ENCODE measurements at regions of chr10 and their contacts with region 1.

Region 1: DNA sequence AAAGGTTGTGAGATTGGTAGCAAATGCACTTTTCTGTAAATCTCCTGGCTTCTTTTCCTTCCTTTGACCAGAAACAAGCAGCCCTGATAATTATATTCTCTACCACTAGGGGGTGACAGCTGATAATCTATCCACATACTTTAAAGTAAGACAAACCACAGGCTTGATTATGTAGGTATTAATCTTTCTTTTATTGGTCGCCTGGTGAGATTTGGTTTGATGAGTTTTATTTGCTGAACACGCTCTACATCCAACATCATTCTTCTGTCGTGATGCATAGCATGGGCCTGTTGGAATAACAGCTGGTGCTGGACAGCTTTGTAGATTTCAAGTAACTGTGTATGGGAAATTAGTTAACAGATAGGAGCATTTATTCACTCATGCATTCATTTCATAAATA is 63.5 kb downstream of the ZNF365 start:
- DNase-seq: peak; percentile 40 to 68
- ATAC-seq: peak; percentile 69 to 85; a peak in 4 of 6 replicates
- H3K4me3 ChIP-seq: no peak overlapping the region
- H3K27ac ChIP-seq: no peak overlapping the region
- H3K4me1 ChIP-seq: peaks cover 18% of the 10 kb centered on the region
- CTCF ChIP-seq: peak; percentile 89
- EP300 ChIP-seq: no peak
- POLR2A ChIP-seq: no peak
- RAD21 ChIP-seq: peak; percentile 86

Region 2: GRCh38 chr10:62264702-62265436 is 172.8 kb before region 1 on chr10:
- CTCF ChIA-PET with region 1: interaction called, 10 read pairs
- POLR2A ChIA-PET with region 1: interaction called, 3 read pairs
- DNase-seq: peak; percentile 50 to 85
- ATAC-seq: peak; percentile 75 to 82
- H3K4me3 ChIP-seq: no peak overlapping the region
- H3K27ac ChIP-seq: no peak overlapping the region
- H3K4me1 ChIP-seq: peaks cover 7% of the 10 kb centered on the region; the same call in 1 of the 3 replicates
- CTCF ChIP-seq: peak; percentile 57
- EP300 ChIP-seq: no peak
- POLR2A ChIP-seq: no peak
- RAD21 ChIP-seq: peak; percentile 63 to 66

Region 3: GRCh38 chr10:62451611-62451975 is 13.9 kb after region 1 on chr10:
- CTCF ChIA-PET with region 1: interaction called, 28 read pairs
- POLR2A ChIA-PET with region 1: no interaction called
- DNase-seq: no peak
- ATAC-seq: no peak
- H3K4me3 ChIP-seq: no peak overlapping the region
- H3K27ac ChIP-seq: no peak overlapping the region
- H3K4me1 ChIP-seq: peaks cover 12% of the 10 kb centered on the region
- CTCF ChIP-seq: no peak
- EP300 ChIP-seq: no peak
- POLR2A ChIP-seq: no peak
- RAD21 ChIP-seq: no peak

Region 4: GRCh38 chr10:62594093-62594520 is 156.4 kb after region 1 on chr10:
- CTCF ChIA-PET with region 1: interaction called, 14 read pairs
- POLR2A ChIA-PET with region 1: no interaction called
- DNase-seq: peak; percentile 26 to 58
- ATAC-seq: peak; percentile 94 to 98
- H3K4me3 ChIP-seq: no peak overlapping the region
- H3K27ac ChIP-seq: no peak overlapping the region
- H3K4me1 ChIP-seq: no peaks in the 10 kb centered on the region
- CTCF ChIP-seq: peak; percentile 84
- EP300 ChIP-seq: no peak
- POLR2A ChIP-seq: no peak
- RAD21 ChIP-seq: peak; percentile 88 to 96

Region 5: DNA sequence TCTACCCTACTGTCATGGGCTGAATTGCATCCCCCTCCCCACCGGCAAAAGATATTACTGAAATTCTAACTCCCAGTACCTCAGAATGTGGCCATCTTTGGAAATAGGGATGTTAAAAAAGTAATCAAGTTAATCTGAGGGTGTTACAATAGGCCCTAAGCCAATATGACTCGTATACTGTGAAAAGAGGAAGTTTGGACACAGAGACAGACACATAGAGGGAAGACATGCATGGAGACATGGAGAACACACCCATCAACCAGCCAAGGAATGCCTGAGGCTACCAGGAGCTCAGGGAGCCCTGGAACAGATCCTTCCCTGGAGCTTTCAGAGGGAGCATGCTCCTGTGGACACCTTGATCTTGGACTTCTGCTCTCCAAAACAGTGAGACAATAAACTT is 228.6 kb after region 1 on chr10:
- CTCF ChIA-PET with region 1: no interaction called
- POLR2A ChIA-PET with region 1: no interaction called
- DNase-seq: no peak
- ATAC-seq: no peak
- H3K4me3 ChIP-seq: no peak overlapping the region
- H3K27ac ChIP-seq: no peak overlapping the region
- H3K4me1 ChIP-seq: no peaks in the 10 kb centered on the region
- CTCF ChIP-seq: no peak
- EP300 ChIP-seq: no peak
- POLR2A ChIP-seq: no peak
- RAD21 ChIP-seq: no peak

Region 6: DNA sequence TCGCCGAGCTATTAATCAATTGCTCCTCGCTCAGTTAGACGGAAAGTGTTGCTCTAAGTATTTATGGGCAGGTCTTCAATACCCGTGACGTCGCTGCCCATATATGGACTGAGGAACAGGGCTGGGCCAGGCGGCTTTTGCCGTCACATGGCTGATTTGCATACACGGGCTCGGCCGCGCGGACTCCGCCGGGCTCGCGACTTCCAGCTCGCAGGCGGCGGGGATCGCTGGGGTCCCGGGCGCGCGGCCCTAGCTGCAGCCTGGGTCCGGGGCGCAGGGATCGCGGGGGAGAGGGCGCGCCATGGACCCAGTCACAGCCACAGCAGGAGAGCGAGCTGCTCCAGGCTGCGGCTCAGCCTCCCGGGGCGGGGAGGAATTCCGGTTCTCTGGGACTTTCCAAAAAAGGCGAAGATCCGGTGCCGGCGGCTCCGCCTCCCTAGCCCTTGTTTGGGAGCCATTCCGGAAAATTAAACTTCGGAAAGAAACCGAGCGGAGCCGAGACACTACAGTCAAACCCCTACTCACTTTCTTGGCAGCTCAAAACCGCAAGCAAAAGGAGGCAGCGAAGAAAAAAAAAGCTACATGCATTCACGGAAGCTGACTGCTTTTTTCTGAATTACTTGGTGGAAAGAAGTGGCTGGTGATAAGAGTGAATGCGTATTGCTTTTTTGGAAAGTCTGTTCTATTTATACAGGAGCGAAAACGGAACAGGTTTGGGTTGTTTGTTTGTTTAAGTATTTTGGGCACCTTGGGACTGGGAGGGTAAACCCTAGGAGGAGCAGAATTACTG is 378.8 kb after region 1 on chr10 and contains the start of gene EGR2:
- CTCF ChIA-PET with region 1: interaction called, 41 read pairs
- POLR2A ChIA-PET with region 1: no interaction called
- DNase-seq: peak; percentile 90 to 95
- ATAC-seq: peak; percentile 78 to 88
- H3K4me3 ChIP-seq: peak within 1 kb of the TSS; percentile 58
- H3K27ac ChIP-seq: peak within 1 kb of the TSS; percentile 38 to 86; a peak in 4 of 6 replicates
- H3K4me1 ChIP-seq: peaks cover 18% of the 10 kb centered on the region
- CTCF ChIP-seq: no peak
- EP300 ChIP-seq: no peak
- POLR2A ChIP-seq: no peak
- RAD21 ChIP-seq: no peak
- polyA plus RNA-seq, gene EGR2: 1.6 and 4.4 TPM in 2 replicates

Measured in A549 (cell line).